ENCODE measurements at regions of chr5 and their contacts with region 1.

Region 1: DNA sequence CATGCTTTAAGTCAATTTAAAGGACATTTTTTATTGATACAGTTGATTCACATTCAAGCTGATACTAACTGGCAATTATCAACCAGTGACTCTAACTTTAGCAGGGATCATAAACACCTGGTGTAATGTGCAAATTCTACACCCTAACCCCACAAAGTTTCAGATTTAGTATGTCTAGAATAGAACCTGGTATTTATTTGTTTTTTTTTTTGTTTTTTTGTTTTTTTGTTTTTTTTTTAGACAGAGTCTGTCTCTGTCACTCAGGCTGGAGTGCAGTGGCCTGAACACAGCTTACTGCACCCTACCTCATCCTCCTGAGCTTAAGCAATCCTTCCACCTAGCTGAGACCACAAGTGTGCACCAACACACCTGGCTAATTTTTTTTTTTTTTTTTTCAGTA is 311.2 kb upstream of the SEMA6A start:
- DNase-seq: no peak
- H3K4me3 ChIP-seq: no peak overlapping the region
- H3K27ac ChIP-seq: no peak overlapping the region
- H3K4me1 ChIP-seq: no peaks in the 10 kb centered on the region
- H3K27me3 ChIP-seq: no peaks in the 10 kb centered on the region
- CTCF ChIP-seq: no peak

Region 2: GRCh38 chr5:116759860-116760640 is 125.8 kb before region 1 on chr5:
- CTCF ChIA-PET with region 1: no interaction called
- POLR2A ChIA-PET with region 1: no interaction called
- intact Hi-C with region 1: no loop called
- DNase-seq: peak; percentile 87
- H3K4me3 ChIP-seq: no peak overlapping the region
- H3K27ac ChIP-seq: peak overlapping the region; percentile 17
- H3K4me1 ChIP-seq: peaks cover 18% of the 10 kb centered on the region
- H3K27me3 ChIP-seq: no peaks in the 10 kb centered on the region
- CTCF ChIP-seq: no peak

Region 3: GRCh38 chr5:116864135-116864837 is 21.5 kb before region 1 on chr5:
- CTCF ChIA-PET with region 1: no interaction called
- POLR2A ChIA-PET with region 1: interaction called, 12 read pairs
- intact Hi-C with region 1: no loop called
- DNase-seq: no peak
- H3K4me3 ChIP-seq: no peak overlapping the region
- H3K27ac ChIP-seq: no peak overlapping the region
- H3K4me1 ChIP-seq: no peaks in the 10 kb centered on the region
- H3K27me3 ChIP-seq: no peaks in the 10 kb centered on the region
- CTCF ChIP-seq: no peak

Region 4: DNA sequence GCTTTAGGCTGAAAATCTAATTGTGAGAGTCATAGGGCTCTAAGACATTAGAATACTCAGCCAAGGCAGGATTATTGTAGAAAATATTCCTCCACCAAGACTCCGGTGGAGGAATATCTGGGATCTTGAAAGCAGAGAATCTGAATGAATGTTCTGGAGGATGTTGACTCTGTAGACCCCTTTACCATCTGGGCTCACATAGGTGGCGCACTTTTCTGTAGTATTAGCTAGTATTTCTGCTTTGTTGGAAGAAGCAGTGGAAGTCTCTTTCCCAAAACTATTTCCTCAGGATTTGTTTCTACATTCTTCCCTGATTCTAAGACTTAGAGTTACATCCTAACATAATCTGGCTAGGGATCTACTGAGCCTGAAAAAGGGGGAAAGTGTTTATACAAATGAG is 441.2 kb after region 1 on chr5:
- CTCF ChIA-PET with region 1: no interaction called
- POLR2A ChIA-PET with region 1: no interaction called
- intact Hi-C with region 1: no loop called
- DNase-seq: no peak
- H3K4me3 ChIP-seq: no peak overlapping the region
- H3K27ac ChIP-seq: no peak overlapping the region
- H3K4me1 ChIP-seq: no peaks in the 10 kb centered on the region
- H3K27me3 ChIP-seq: no peaks in the 10 kb centered on the region
- CTCF ChIP-seq: no peak